Right cardiac atrium (tissue), 5 donors: ENCODE measurements at regions of chr18 and their contacts with region 1.

Region 1: DNA sequence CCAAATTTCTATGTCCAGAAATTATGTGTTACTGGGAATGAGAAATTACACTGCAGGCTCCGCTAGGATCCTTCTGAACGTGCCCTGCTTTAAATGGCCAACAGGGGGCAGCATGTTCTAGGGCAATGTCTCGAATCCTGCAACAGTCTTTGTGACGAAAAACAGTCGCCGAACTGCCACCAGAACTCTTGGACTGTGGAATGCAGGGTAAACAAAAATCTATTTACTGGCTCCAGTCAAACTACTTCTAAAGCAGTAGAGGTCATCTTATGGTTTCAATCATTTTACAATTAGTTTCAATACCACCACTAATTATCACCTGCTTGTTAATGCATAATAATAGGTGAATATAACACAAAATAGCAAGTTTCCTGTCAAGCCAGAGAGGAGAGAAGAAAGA is 9.8 kb upstream of the ZNF397 start:
- DNase-seq: peak; percentile 78 to 90 (median 86)
- ATAC-seq: peak; percentile 86 to 90
- H3K4me3 ChIP-seq: peak overlapping the region; percentile 40
- H3K27ac ChIP-seq: no peak overlapping the region
- H3K4me1 ChIP-seq: no peaks in the 10 kb centered on the region
- H3K27me3 ChIP-seq: no peaks in the 10 kb centered on the region

Region 2: GRCh38 chr18:35352778-35353177 is 121.7 kb after region 1 on chr18:
- intact Hi-C with region 1: loop called in 3 of 4 experiments (anchors 5 to 10 kb)
- DNase-seq: no peak
- ATAC-seq: no peak
- H3K4me3 ChIP-seq: no peak overlapping the region
- H3K27ac ChIP-seq: no peak overlapping the region
- H3K4me1 ChIP-seq: no peaks in the 10 kb centered on the region
- H3K27me3 ChIP-seq: no peaks in the 10 kb centered on the region

Region 3: DNA sequence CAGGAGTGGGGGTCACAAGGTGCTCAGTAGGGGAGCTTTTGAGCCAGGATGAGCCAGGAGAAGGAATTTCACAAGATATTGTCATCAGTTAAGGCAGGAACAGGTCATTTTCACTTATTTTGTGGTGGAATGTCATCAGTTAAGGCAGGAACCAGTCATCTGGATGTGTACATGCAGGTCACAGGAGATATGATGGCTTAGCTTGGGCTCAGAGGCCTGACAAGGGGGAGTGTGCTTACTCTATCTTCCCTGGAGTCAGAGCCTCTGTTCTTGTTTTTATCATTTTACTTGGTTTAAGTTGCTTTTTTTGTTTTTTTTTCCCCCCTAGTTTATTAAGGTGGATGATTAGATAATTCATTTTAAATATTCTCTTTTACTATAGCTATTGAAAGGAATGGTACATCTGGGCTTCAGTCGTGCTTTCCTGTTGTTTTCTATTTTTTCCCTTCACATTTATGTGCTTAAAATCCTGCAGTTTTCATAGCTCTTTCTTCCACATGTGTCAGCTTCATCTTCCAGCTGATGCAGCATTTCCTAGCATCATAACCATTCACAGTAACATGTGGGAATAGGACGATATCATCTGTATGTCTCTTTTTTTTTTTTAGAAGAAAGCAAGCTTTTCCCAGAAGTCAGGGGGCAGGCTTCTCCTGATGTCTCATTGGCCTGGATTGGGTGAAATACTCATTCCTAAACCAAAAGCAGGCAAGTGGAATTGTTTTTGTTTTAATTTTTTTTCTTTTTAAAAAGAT is 130.7 kb after region 1 on chr18:
- intact Hi-C with region 1: loop called in 1 of 4 experiments (anchors 5 kb)
- DNase-seq: no peak
- ATAC-seq: no peak
- H3K4me3 ChIP-seq: no peak overlapping the region
- H3K27ac ChIP-seq: no peak overlapping the region
- H3K4me1 ChIP-seq: no peaks in the 10 kb centered on the region
- H3K27me3 ChIP-seq: no peaks in the 10 kb centered on the region